ENCODE measurements at regions of chr21 and their contacts with region 1.

Region 1: GRCh38 chr21:45923146-45923545 is 58.4 kb upstream of the COL6A1 start:
- DNase-seq: peak; percentile 44
- H3K4me3 ChIP-seq: no peak overlapping the region
- H3K27ac ChIP-seq: no peak overlapping the region
- H3K4me1 ChIP-seq: no peaks in the 10 kb centered on the region
- H3K27me3 ChIP-seq: no peaks in the 10 kb centered on the region
- CTCF ChIP-seq: peak; percentile 96 to 99

Region 2: DNA sequence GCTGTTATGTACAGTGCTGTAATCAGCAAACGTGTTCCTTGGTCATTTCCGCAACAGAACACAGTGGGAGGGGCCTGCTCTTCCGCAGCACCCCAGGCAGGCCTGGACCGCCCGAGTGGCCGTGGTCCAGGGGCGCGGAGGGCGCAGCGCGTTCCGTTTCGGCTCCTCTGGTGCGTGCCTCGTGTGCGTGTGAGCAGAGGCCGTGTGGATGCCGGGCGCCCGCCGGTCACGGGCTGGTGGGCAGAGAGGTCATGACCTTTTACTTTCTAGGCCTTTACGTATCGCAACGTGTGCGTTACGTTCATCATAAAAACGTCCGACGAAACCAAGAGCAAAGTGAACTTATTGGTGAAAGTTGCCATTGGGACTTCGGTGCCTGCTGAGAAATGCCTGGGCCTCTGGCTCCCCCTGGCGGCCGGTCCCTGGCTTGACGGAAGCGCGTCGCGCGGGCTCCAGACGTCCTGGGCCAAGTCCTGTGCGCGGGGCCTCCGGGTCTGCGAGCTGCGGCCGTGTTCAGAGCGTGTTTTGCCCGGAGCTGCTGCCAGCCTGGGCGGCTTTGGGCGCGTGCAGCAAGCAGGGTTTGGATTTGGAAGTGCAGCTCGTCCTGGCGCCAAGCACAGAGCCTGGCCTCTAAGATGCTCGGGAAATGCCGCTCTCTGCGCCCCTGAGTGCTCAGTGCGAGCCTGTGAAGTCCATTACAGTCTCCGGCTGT is 483.8 kb before region 1 on chr21:
- CTCF ChIA-PET with region 1: no interaction called
- dilution Hi-C with region 1: no loop called
- in situ Hi-C with region 1: no loop called
- intact Hi-C with region 1: loop called (anchors 5 kb)
- DNase-seq: peak; percentile 59
- H3K4me3 ChIP-seq: peak overlapping the region in 2 of 3 experiments; percentile 20 to 30
- H3K27ac ChIP-seq: no peak overlapping the region
- H3K4me1 ChIP-seq: peaks cover 7% of the 10 kb centered on the region
- H3K27me3 ChIP-seq: no peaks in the 10 kb centered on the region
- CTCF ChIP-seq: peak; percentile 79 to 96

Region 3: GRCh38 chr21:45698493-45699184 is 224.5 kb before region 1 on chr21:
- CTCF ChIA-PET with region 1: no interaction called
- dilution Hi-C with region 1: no loop called
- in situ Hi-C with region 1: no loop called
- intact Hi-C with region 1: loop called (anchors 5 kb)
- DNase-seq: peak; percentile 89
- H3K4me3 ChIP-seq: no peak overlapping the region
- H3K27ac ChIP-seq: no peak overlapping the region
- H3K4me1 ChIP-seq: peaks cover 13% of the 10 kb centered on the region
- H3K27me3 ChIP-seq: no peaks in the 10 kb centered on the region
- CTCF ChIP-seq: no peak

Region 4: DNA sequence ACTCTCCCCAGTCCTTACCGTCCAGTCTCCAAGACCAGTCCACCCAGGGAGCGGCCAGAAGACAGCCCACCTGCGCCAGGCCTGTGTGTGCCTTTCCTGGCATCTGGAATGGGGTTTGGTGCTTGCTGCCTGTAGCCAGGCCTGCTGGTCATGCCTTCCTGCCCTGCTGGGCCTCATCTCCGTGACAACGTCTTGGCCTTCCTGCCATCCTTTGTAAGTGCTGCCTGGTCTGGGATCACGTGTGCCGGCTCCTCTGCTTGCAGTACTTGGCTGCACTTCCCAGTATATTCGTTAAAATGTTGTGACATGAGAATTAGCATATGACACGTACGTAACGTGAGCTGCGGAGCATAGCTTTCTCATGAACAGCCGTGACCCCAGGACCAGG is 86.9 kb before region 1 on chr21:
- CTCF ChIA-PET with region 1: no interaction called
- dilution Hi-C with region 1: no loop called
- in situ Hi-C with region 1: no loop called
- intact Hi-C with region 1: no loop called
- DNase-seq: no peak
- H3K4me3 ChIP-seq: no peak overlapping the region
- H3K27ac ChIP-seq: no peak overlapping the region
- H3K4me1 ChIP-seq: peaks cover 7% of the 10 kb centered on the region
- H3K27me3 ChIP-seq: no peaks in the 10 kb centered on the region
- CTCF ChIP-seq: no peak

Region 5: GRCh38 chr21:45880097-45881068 is 42.8 kb before region 1 on chr21:
- CTCF ChIA-PET with region 1: interaction called, 3 read pairs
- dilution Hi-C with region 1: no loop called
- in situ Hi-C with region 1: no loop called
- intact Hi-C with region 1: loop called (anchors 5 kb)
- DNase-seq: peak; percentile 67
- H3K4me3 ChIP-seq: peak overlapping the region in 2 of 3 experiments; percentile 7 to 12
- H3K27ac ChIP-seq: peak overlapping the region; percentile 33
- H3K4me1 ChIP-seq: peaks cover 16% of the 10 kb centered on the region
- H3K27me3 ChIP-seq: no peaks in the 10 kb centered on the region
- CTCF ChIP-seq: peak; percentile 82 to 89

Region 6: GRCh38 chr21:45892156-45892902 is 30.8 kb before region 1 on chr21:
- CTCF ChIA-PET with region 1: no interaction called
- dilution Hi-C with region 1: no loop called
- in situ Hi-C with region 1: no loop called
- intact Hi-C with region 1: no loop called
- DNase-seq: no peak
- H3K4me3 ChIP-seq: no peak overlapping the region
- H3K27ac ChIP-seq: no peak overlapping the region
- H3K4me1 ChIP-seq: peaks cover 3% of the 10 kb centered on the region
- H3K27me3 ChIP-seq: peaks cover 10% of the 10 kb centered on the region
- CTCF ChIP-seq: no peak

Region 7: GRCh38 chr21:46060596-46061061 is 137.5 kb after region 1 on chr21:
- CTCF ChIA-PET with region 1: no interaction called
- dilution Hi-C with region 1: no loop called
- in situ Hi-C with region 1: no loop called
- intact Hi-C with region 1: no loop called
- DNase-seq: peak; percentile 67
- H3K4me3 ChIP-seq: no peak overlapping the region
- H3K27ac ChIP-seq: no peak overlapping the region
- H3K4me1 ChIP-seq: peaks cover 11% of the 10 kb centered on the region
- H3K27me3 ChIP-seq: no peaks in the 10 kb centered on the region
- CTCF ChIP-seq: no peak